Activated naive CD4-positive, alpha-beta T cell treated with anti-CD3 and anti-CD28 coated beads for 36 hours (primary cell): ENCODE measurements at regions of chr15 and their contacts with region 1.

Region 1: GRCh38 chr15:101641166-101641764 is 10.9 kb downstream of the TM2D3 start:
- DNase-seq: peak; percentile 86
- H3K4me3 Mint-ChIP-seq: no peak overlapping the region
- H3K27ac Mint-ChIP-seq: peak overlapping the region; percentile 59
- H3K4me1 Mint-ChIP-seq: peaks cover 30% of the 10 kb centered on the region
- H3K27me3 Mint-ChIP-seq: no peaks in the 10 kb centered on the region

Region 2: DNA sequence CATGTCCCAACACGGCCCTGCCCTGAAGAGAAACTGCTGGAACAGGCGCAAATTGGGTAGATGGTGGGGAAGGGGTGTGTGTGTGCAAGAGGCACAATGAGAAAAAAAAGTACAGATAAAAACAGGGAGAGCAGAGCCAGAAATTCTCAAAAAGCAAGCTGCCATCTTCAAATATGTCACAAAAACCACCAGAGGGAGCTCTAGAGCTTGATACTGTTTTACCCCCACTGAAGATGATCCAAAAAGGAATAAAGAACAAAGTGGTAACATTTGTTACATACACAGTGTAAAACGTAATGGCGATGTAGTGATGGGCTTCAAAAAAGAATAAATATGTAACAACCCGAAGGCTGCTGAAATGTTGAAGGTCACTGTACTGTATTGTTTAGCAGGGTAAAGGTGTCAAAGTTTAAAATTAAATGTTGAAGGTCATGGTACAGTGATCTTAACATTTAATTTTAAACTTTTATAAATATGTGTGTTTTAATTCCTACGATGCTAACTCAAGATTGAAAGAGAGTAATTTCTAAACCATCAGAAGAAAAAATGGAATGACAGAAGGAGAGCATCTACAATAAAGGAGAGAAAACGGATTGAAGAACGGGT is 352.3 kb before region 1 on chr15:
- CTCF ChIA-PET with region 1: interaction called, 45 read pairs
- intact Hi-C with region 1: no loop called
- DNase-seq: no peak
- H3K4me3 Mint-ChIP-seq: no peak overlapping the region
- H3K27ac Mint-ChIP-seq: peak overlapping the region; percentile 29
- H3K4me1 Mint-ChIP-seq: peaks cover 56% of the 10 kb centered on the region
- H3K27me3 Mint-ChIP-seq: no peaks in the 10 kb centered on the region

Region 3: GRCh38 chr15:101501703-101502373 is 139.4 kb before region 1 on chr15:
- CTCF ChIA-PET with region 1: interaction called, 5 read pairs
- intact Hi-C with region 1: loop called (anchors 5 kb)
- DNase-seq: peak; percentile 74
- H3K4me3 Mint-ChIP-seq: peak overlapping the region; percentile 51
- H3K27ac Mint-ChIP-seq: peak overlapping the region; percentile 44
- H3K4me1 Mint-ChIP-seq: no peaks in the 10 kb centered on the region
- H3K27me3 Mint-ChIP-seq: peaks cover 16% of the 10 kb centered on the region